Heart left ventricle (tissue), 16 donors: ENCODE measurements at regions of chr16 and their contacts with region 1.

Region 1: GRCh38 chr16:22638393-22639206 is 127.9 kb downstream of the NPIPB5 start:
- DNase-seq: no peak
- ATAC-seq: peak in 1 of 4 donors; percentile 34
- H3K4me3 ChIP-seq: no peak overlapping the region
- H3K27ac ChIP-seq: no peak overlapping the region
- H3K4me1 ChIP-seq: no peaks in the 10 kb centered on the region
- H3K27me3 ChIP-seq: peaks cover 0 to 65% (median 13%) of the 10 kb centered on the region in 9 donors
- CTCF ChIP-seq: no peak
- POLR2A ChIP-seq: no peak

Region 2: GRCh38 chr16:21233521-21234150 is 1405.0 kb before region 1 on chr16 and contains the start of gene ANKS4B:
- intact Hi-C with region 1: loop called in 1 of 10 experiments (anchors 10 kb)
- DNase-seq: no peak
- ATAC-seq: no peak
- H3K4me3 ChIP-seq: no peak within 1 kb of the TSS
- H3K27ac ChIP-seq: no peak within 1 kb of the TSS
- H3K4me1 ChIP-seq: no peaks in the 10 kb centered on the region
- H3K27me3 ChIP-seq: peaks cover 0 to 10% (median 0%) of the 10 kb centered on the region in 9 donors
- CTCF ChIP-seq: no peak
- POLR2A ChIP-seq: no peak
- total RNA-seq, gene ANKS4B: not detected

Region 3: DNA sequence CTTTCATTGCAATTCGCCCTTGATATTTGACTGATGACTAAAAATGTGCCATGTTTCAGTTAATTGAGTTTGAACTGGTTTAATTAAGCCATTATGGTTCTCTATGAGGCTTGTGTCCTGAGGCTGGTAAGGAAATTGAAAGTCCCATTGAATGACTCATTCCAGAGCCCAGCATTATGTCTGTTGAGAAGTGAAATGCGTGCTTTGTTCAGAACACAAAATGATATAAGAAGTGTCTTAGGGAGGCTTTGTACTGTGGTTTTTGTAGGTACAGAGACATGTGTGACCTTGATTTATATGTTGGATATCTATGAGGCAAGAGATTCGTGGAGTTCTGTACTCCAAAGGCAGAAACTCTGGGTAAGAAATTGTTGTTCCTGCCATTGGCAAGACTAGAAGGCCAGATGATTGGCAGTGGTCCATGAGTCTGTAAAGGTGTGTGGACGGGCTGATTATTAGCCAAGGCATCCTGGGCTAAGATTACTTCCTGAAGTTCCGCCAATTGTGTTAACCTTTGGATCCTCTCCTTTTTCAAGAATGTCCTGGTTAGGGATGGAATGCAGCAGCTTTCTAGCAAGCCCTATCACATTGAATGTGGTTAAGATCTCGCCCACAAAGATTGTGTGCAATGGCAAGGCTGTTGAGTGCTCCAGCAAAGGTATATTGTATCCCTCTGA is 24.2 kb before region 1 on chr16:
- intact Hi-C with region 1: loop called in 1 of 10 experiments (anchors 1 kb)
- DNase-seq: no peak
- ATAC-seq: no peak
- H3K4me3 ChIP-seq: no peak overlapping the region
- H3K27ac ChIP-seq: no peak overlapping the region
- H3K4me1 ChIP-seq: no peaks in the 10 kb centered on the region
- H3K27me3 ChIP-seq: peaks cover 0 to 13% (median 0%) of the 10 kb centered on the region in 9 donors
- CTCF ChIP-seq: no peak
- POLR2A ChIP-seq: no peak

Region 4: GRCh38 chr16:22694887-22695382 is 56.3 kb after region 1 on chr16:
- intact Hi-C with region 1: no loop called
- DNase-seq: peak in 2 of 5 donors; percentile 38 to 53
- ATAC-seq: peak; percentile 80 to 96 (median 88)
- H3K4me3 ChIP-seq: peak overlapping the region in 1 of 12 donors; percentile 3
- H3K27ac ChIP-seq: peak overlapping the region in 11 of 12 donors; percentile 12 to 73 (median 41)
- H3K4me1 ChIP-seq: peaks cover 0 to 14% (median 0%) of the 10 kb centered on the region in 12 donors
- H3K27me3 ChIP-seq: no peaks in the 10 kb centered on the region
- CTCF ChIP-seq: no peak
- POLR2A ChIP-seq: no peak